ENCODE measurements at regions of chr20 and their contacts with region 1.

Region 1: GRCh38 chr20:11204926-11205768 is 531.3 kb upstream of the JAG1 start:
- DNase-seq: peak; percentile 79
- H3K4me3 ChIP-seq: no peak overlapping the region
- H3K27ac ChIP-seq: no peak overlapping the region
- H3K4me1 ChIP-seq: no peaks in the 10 kb centered on the region
- H3K27me3 ChIP-seq: no peaks in the 10 kb centered on the region
- CTCF ChIP-seq: peak; percentile 78 to 87
- POLR2A ChIP-seq: no peak

Region 2: GRCh38 chr20:10761232-10761631 is 443.9 kb before region 1 on chr20:
- CTCF ChIA-PET with region 1: interaction called, 9 read pairs
- POLR2A ChIA-PET with region 1: no interaction called
- dilution Hi-C with region 1: no loop called
- intact Hi-C with region 1: loop called (anchors 10 kb)
- DNase-seq: peak; percentile 93
- H3K4me3 ChIP-seq: no peak overlapping the region
- H3K27ac ChIP-seq: peak overlapping the region; percentile 78
- H3K4me1 ChIP-seq: peaks cover 41% of the 10 kb centered on the region
- H3K27me3 ChIP-seq: no peaks in the 10 kb centered on the region
- CTCF ChIP-seq: no peak
- POLR2A ChIP-seq: peak; percentile 36

Region 3: GRCh38 chr20:10961651-10962288 is 243.4 kb before region 1 on chr20:
- CTCF ChIA-PET with region 1: interaction called, 3 read pairs
- POLR2A ChIA-PET with region 1: no interaction called
- dilution Hi-C with region 1: no loop called
- intact Hi-C with region 1: loop called (anchors 5 kb)
- DNase-seq: peak; percentile 75
- H3K4me3 ChIP-seq: no peak overlapping the region
- H3K27ac ChIP-seq: no peak overlapping the region
- H3K4me1 ChIP-seq: peaks cover 36% of the 10 kb centered on the region
- H3K27me3 ChIP-seq: no peaks in the 10 kb centered on the region
- CTCF ChIP-seq: no peak
- POLR2A ChIP-seq: no peak

Region 4: DNA sequence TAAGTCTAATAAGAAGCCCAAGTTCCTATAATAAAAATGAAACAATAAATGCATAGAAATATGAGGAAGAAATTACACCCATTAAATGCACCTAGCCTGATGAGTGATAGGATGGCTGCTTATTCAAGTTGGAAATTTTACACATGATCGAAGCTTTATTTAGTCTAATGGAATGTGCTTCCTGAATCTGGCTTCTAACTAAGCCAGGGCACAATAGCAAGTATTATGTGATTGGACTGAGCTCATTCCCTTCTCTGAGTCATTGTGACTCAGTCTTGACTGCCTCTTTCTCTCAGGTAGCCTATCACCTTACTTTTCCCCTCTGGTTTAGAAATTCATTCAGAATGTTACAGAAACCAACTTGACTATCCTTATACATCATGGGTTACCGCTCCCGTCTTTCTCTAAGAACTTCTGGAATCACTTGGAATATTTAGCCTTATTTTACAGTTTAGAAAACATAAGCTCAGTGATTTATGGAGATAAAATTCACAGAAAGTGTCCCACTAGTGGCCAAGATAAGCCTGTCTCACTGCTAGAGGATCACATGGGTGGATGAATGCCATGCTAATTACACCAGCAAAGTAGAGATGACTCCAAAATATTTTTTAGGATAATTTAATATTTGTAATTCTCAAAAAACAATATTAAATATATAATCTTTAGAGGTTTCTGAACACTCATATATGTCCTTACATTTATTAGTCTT is 26.0 kb before region 1 on chr20:
- CTCF ChIA-PET with region 1: interaction called, 15 read pairs
- POLR2A ChIA-PET with region 1: no interaction called
- dilution Hi-C with region 1: no loop called
- intact Hi-C with region 1: no loop called
- DNase-seq: peak; percentile 95
- H3K4me3 ChIP-seq: no peak overlapping the region
- H3K27ac ChIP-seq: peak overlapping the region; percentile 78
- H3K4me1 ChIP-seq: peaks cover 14% of the 10 kb centered on the region
- H3K27me3 ChIP-seq: no peaks in the 10 kb centered on the region
- CTCF ChIP-seq: no peak
- POLR2A ChIP-seq: no peak

Region 5: DNA sequence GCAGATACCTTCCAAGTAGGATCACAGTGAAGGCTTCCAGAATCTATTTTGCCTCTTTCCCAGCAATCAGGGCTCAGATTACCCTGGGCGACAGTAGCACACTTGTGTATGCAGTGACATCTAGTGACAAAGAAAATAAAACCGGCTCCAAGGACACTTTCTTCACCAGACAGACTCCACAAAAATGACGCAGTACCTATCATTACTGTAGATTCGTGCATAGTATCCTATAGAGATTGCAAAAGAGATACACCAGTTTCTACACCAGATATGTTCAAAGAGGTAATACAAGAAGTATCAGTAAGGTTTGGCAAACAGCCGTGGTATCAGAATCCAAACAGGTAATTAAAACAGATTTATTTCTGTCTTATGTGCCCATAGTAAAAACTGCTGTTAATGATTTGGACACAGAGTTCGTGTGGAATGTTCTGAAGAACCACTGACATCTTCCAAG is 69.0 kb after region 1 on chr20:
- CTCF ChIA-PET with region 1: interaction called, 6 read pairs
- POLR2A ChIA-PET with region 1: no interaction called
- dilution Hi-C with region 1: no loop called
- intact Hi-C with region 1: loop called (anchors 2 kb)
- DNase-seq: peak; percentile 74
- H3K4me3 ChIP-seq: no peak overlapping the region
- H3K27ac ChIP-seq: no peak overlapping the region
- H3K4me1 ChIP-seq: no peaks in the 10 kb centered on the region
- H3K27me3 ChIP-seq: no peaks in the 10 kb centered on the region
- CTCF ChIP-seq: peak; percentile 42 to 46
- POLR2A ChIP-seq: no peak

Measured in endothelial cell of umbilical vein (primary cell).